Activated T-helper 2 cell treated with anti-CD3 and anti-CD28 coated beads, Interferon-gamma antibody, Interleukin-2, Interleukin-4, amounts not matched to agents 10 μg/mL and 5 μg/mL and 100 μg/mL, durations not matched to agents 14 hours and 24 hours and 36 hours (primary cell): ENCODE measurements at regions of chr22 and their contacts with region 1.

Region 1: DNA sequence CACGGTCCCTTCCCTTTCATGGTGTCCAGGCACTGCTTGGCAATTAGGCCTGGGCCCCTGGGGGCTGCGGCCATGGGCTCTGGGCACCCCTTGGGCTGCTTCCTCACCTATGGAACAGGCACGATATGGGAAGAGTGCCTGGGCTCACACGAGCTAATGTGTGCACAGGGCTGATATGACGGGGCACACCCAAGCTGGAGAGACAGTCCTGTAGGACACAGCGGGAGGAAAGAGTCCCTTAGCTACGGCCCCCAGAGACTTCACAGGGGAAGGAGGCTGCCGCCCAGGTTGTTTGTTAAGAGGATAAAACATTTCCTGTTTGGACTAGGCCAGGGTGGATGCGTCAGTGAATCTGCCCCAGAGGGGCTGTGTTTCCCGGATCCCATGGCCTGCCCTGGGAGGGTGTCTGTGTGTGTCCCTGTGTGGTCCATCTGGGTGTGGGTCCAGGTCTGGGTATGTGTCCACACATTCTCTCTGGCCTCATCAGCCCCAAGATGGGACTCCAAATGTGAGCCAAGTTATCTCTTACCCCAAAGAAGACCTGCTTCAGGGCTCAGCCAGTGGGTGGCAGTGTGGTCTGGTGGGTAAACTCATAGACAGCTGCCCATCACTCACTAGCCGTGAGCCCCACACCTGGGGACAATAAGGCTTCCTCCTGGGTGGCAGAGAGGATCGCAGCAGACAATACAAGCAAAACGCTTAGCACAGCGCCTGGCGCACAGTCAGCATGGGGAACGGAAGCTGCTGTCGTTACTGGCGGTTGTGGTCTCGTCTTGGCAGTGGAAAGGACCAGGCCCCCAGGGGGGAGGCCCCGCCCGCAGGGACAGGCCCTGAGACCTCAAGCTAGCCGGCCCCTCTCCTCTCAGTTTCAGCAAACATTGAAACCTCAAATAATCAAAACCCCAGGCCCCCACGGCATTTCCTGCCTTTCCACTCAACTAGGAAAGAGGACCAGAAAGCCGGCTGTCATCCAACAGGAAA is 3.2 kb upstream of the EMID1 start:
- DNase-seq: peak; percentile 58
- H3K4me3 Mint-ChIP-seq: no peak overlapping the region
- H3K27ac Mint-ChIP-seq: peak overlapping the region; percentile 51
- H3K4me1 Mint-ChIP-seq: peaks cover 27% of the 10 kb centered on the region
- H3K27me3 Mint-ChIP-seq: peaks cover 41% of the 10 kb centered on the region

Region 2: DNA sequence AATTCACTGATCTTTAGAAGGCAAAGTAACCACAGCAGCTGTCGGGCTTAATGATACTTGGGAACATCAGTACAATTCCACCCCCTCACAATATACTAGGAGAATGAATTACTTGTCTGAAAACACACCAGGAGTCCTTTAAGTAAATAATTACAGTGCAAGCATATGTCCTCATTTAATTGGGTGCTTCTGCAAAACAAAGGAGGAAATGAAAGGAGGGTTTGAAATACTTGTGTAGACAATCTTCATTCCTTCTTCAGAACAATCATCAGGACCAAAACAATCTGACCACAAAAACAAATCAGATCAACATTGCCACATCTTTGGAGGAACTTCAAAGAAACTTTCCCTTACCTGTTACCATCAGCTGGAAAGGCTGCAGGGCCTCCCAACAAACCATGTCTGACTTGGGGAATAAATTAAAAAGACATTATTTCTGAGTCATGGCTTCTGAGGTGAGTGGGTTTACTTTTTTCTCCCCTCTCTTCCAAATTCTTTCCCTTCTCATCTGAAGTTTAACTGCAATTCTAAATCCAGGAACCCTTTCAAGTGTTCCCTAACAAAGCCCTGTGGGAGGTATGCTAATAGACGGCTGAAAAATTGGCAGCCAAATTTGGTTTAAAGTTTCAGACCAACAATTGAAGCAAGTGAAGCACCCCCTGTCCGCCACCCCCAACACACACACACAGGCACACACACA is 442.5 kb before region 1 on chr22:
- intact Hi-C with region 1: no loop called
- DNase-seq: no peak
- H3K4me3 Mint-ChIP-seq: no peak overlapping the region
- H3K27ac Mint-ChIP-seq: no peak overlapping the region
- H3K4me1 Mint-ChIP-seq: no peaks in the 10 kb centered on the region
- H3K27me3 Mint-ChIP-seq: no peaks in the 10 kb centered on the region

Region 3: GRCh38 chr22:29072193-29072978 is 130.1 kb before region 1 on chr22:
- intact Hi-C with region 1: loop called (anchors 5 kb)
- DNase-seq: peak; percentile 78
- H3K4me3 Mint-ChIP-seq: peak overlapping the region; percentile 58
- H3K27ac Mint-ChIP-seq: no peak overlapping the region
- H3K4me1 Mint-ChIP-seq: peaks cover 14% of the 10 kb centered on the region
- H3K27me3 Mint-ChIP-seq: peaks cover 62% of the 10 kb centered on the region

Region 4: GRCh38 chr22:29167032-29167911 is 35.2 kb before region 1 on chr22:
- intact Hi-C with region 1: loop called (anchors 2 kb)
- DNase-seq: peak; percentile 58
- H3K4me3 Mint-ChIP-seq: peak overlapping the region; percentile 27
- H3K27ac Mint-ChIP-seq: peak overlapping the region; percentile 52
- H3K4me1 Mint-ChIP-seq: peaks cover 21% of the 10 kb centered on the region
- H3K27me3 Mint-ChIP-seq: peaks cover 14% of the 10 kb centered on the region

Region 5: GRCh38 chr22:29216873-29217666 is 14.6 kb after region 1 on chr22:
- intact Hi-C with region 1: no loop called
- DNase-seq: no peak
- H3K4me3 Mint-ChIP-seq: no peak overlapping the region
- H3K27ac Mint-ChIP-seq: no peak overlapping the region
- H3K4me1 Mint-ChIP-seq: no peaks in the 10 kb centered on the region
- H3K27me3 Mint-ChIP-seq: no peaks in the 10 kb centered on the region

Region 6: DNA sequence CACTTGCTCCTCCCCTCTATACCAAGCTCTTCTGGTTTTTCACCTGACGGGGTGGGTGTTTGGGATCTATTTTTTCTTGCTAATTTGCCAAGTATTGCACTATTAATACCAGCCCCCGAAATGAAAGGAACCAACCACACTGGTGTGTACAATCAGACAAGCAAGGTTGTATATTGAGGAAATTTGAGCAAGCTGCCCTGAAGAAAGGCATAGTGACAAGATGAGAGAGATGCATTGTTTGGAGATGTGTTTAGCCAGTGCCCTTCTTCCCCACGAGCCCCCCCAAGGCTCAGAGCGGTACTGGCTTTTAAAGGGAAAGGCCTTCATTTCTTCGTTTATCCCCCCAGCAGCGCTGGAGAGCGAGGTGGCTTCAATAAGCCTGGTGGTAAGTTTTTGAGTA is 88.7 kb after region 1 on chr22:
- intact Hi-C with region 1: no loop called
- DNase-seq: no peak
- H3K4me3 Mint-ChIP-seq: no peak overlapping the region
- H3K27ac Mint-ChIP-seq: no peak overlapping the region
- H3K4me1 Mint-ChIP-seq: peaks cover 2% of the 10 kb centered on the region
- H3K27me3 Mint-ChIP-seq: no peaks in the 10 kb centered on the region